ENCODE measurements at regions of chr11 and their contacts with region 1.

Region 1: GRCh38 chr11:93652161-93652597 is 9.3 kb upstream of the CEP295 start:
- DNase-seq: no peak
- H3K4me3 ChIP-seq: no peak overlapping the region
- H3K27ac ChIP-seq: no peak overlapping the region
- H3K4me1 ChIP-seq: no peaks in the 10 kb centered on the region
- H3K27me3 ChIP-seq: no peaks in the 10 kb centered on the region
- CTCF ChIP-seq: peak; percentile 38 to 83 (median 55)
- POLR2A ChIP-seq: no peak

Region 2: DNA sequence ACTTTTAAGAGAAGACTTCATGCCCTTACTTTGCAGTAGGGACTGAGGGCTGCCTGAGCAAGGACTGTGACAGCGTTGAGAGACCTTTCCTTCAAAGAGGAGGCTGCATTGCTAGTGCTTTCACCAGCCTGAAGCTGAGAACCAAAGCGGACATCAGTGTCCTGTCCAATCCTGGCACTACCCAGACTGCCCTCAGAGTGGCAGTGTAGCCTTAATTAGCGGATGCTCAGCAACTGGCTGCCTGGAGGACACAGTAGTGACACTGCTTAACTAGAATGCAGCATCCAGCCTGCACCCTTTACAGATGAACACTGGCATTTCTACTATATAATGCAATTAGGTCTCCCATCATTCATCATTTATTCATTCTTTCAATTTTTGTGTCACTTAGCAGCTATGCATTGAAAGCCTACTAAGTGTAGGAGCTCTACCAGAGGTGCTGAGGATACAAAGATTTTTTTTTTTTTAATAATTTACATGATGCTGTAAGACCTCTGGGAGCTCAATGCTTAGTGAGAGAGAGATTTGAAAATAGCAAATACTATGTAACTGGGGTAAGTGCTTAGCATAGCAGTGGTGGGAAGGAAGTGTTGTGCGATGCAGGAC is 417.5 kb before region 1 on chr11:
- intact Hi-C with region 1: loop called (anchors 5 kb)
- DNase-seq: no peak
- H3K4me3 ChIP-seq: no peak overlapping the region
- H3K27ac ChIP-seq: no peak overlapping the region
- H3K4me1 ChIP-seq: no peaks in the 10 kb centered on the region
- H3K27me3 ChIP-seq: no peaks in the 10 kb centered on the region
- CTCF ChIP-seq: peak in 2 of 3 experiments; percentile 56 to 64
- POLR2A ChIP-seq: no peak